ENCODE measurements at regions of chr5 and their contacts with region 1.

Region 1: GRCh38 chr5:54905943-54906537 is 79.4 kb downstream of the ESM1 start:
- DNase-seq: peak; percentile 42 to 80 (median 70)
- ATAC-seq: peak; percentile 36
- H3K4me3 ChIP-seq: no peak overlapping the region
- H3K4me3 Mint-ChIP-seq: no peak overlapping the region
- H3K27ac ChIP-seq: no peak overlapping the region
- H3K27ac Mint-ChIP-seq: no peak overlapping the region
- H3K4me1 ChIP-seq: no peaks in the 10 kb centered on the region
- H3K4me1 Mint-ChIP-seq: peaks cover 10% of the 10 kb centered on the region
- H3K27me3 ChIP-seq: no peaks in the 10 kb centered on the region
- H3K27me3 Mint-ChIP-seq: peaks cover 6% of the 10 kb centered on the region
- CTCF ChIP-seq: peak; percentile 77

Region 2: DNA sequence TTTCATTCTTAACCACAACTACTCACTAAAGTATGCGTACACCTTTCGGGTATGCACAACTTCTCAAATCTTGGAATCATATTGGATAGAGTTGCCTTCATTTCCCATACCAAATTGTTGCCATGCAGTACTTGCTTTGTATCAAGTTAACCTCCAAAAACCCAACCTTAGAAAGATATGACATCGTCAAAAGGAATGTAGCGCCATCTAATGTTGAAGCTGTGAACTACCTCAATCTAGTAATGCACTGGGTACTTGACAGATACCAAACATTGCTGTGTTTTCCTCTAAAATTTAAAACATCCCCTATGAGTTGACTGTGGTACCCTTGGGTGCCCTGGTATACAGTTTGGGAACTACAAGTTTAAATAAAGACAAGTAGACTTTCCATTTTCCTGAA is 914.1 kb before region 1 on chr5:
- CTCF ChIA-PET with region 1: no interaction called
- POLR2A ChIA-PET with region 1: no interaction called
- intact Hi-C with region 1: no loop called
- DNase-seq: no peak
- ATAC-seq: no peak
- H3K4me3 ChIP-seq: no peak overlapping the region
- H3K4me3 Mint-ChIP-seq: no peak overlapping the region
- H3K27ac ChIP-seq: no peak overlapping the region
- H3K27ac Mint-ChIP-seq: no peak overlapping the region
- H3K4me1 ChIP-seq: no peaks in the 10 kb centered on the region
- H3K4me1 Mint-ChIP-seq: no peaks in the 10 kb centered on the region
- H3K27me3 ChIP-seq: no peaks in the 10 kb centered on the region
- H3K27me3 Mint-ChIP-seq: no peaks in the 10 kb centered on the region
- CTCF ChIP-seq: no peak

Region 3: GRCh38 chr5:54895816-54896341 is 10.2 kb before region 1 on chr5:
- CTCF ChIA-PET with region 1: interaction called, 11 read pairs
- POLR2A ChIA-PET with region 1: no interaction called
- intact Hi-C with region 1: no loop called
- DNase-seq: peak in 2 of 9 experiments; percentile 26 to 46
- ATAC-seq: no peak
- H3K4me3 ChIP-seq: no peak overlapping the region
- H3K4me3 Mint-ChIP-seq: peak overlapping the region; percentile 60
- H3K27ac ChIP-seq: no peak overlapping the region
- H3K27ac Mint-ChIP-seq: peak overlapping the region; percentile 32
- H3K4me1 ChIP-seq: no peaks in the 10 kb centered on the region
- H3K4me1 Mint-ChIP-seq: peaks cover 5% of the 10 kb centered on the region
- H3K27me3 ChIP-seq: no peaks in the 10 kb centered on the region
- H3K27me3 Mint-ChIP-seq: peaks cover 26% of the 10 kb centered on the region
- CTCF ChIP-seq: no peak

Region 4: DNA sequence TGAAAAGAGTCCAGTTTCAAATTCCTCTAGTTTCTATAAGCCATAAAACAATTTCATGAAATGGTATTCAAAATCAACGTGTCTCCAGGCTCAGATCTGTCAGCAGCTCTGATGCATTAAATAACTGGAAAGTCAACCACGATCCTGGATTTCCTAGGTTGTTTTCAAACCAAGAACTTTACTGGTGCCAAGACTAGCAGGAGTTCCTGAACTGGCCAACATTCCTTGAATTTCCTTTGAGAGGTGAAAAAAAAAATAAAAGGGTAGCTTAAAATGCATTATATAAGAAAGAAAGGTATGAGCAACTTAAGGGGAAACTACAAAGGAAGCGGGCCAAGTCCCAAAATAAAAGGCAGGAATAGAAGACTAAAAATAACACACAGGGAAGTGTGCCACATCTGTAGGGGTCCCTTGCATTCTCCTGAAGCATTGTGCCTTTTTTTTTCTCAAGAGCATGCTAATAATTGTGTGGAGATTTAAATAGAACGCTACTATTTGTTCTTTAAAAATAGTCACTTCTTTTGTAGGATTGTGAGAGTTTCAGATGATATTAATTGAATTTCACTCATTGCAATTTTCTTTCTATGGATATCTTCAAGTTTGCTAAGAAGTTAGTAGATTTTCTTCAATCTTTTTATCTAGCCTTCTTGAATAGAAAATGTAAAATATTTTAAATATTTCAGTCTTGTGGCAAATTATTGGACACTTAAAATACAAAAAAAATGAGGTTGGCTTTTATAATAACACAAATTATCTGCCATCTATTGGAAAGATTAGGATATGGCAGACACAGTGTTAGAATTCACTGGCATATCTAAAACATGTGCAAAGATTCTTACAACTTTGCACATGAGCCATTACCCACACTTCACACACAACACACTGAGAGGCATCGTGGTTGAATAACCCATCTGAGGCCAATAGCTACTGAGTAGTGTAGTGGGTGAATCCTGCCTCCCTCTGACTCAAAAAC is 64.1 kb after region 1 on chr5:
- CTCF ChIA-PET with region 1: interaction called, 12 read pairs
- POLR2A ChIA-PET with region 1: no interaction called
- intact Hi-C with region 1: no loop called
- DNase-seq: no peak
- ATAC-seq: no peak
- H3K4me3 ChIP-seq: no peak overlapping the region
- H3K4me3 Mint-ChIP-seq: no peak overlapping the region
- H3K27ac ChIP-seq: no peak overlapping the region
- H3K27ac Mint-ChIP-seq: no peak overlapping the region
- H3K4me1 ChIP-seq: no peaks in the 10 kb centered on the region
- H3K4me1 Mint-ChIP-seq: no peaks in the 10 kb centered on the region
- H3K27me3 ChIP-seq: no peaks in the 10 kb centered on the region
- H3K27me3 Mint-ChIP-seq: no peaks in the 10 kb centered on the region
- CTCF ChIP-seq: no peak

Region 5: DNA sequence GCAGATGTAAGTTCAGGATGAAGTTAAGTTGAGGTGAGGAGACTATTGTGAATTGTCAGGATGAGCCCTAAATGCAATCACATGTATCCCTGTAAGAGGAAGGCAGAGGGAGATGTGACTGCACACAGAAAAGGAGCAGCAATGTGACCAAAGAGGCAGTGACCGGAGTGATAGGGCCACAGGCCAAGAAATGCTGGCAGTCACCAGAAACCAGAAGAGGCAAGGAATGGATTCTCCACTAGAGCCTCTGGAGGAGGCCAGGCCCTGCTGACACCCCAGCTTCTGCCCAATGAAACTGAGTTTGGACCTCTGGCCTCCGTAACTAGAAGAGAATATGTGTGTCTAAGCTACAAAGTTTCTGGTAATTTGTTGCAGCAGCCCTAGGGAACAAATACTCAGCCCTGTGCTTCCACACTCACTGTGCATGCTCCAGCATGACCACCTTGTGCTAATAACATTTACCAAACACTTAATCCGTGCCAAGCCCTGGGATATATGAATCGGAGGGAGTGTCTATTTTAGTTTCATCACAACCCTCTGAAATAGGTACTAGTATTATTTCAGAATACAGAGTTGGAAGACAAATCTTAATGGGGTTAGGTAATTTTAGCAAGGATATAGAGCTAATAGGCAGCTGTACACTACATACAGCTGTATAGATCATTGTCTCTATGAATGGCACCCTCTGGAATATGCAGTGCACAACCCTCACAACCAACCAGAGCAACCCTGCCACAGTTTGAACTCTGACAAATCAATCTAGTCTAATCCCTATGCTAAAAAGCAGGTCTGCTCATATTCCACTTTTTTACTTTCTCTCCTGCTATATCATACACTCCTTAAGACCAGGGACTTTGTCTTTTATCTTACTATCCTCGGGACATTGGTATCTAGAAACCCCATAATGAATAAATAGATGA is 246.1 kb after region 1 on chr5:
- CTCF ChIA-PET with region 1: interaction called, 179 read pairs
- POLR2A ChIA-PET with region 1: no interaction called
- intact Hi-C with region 1: no loop called
- DNase-seq: no peak
- ATAC-seq: no peak
- H3K4me3 ChIP-seq: no peak overlapping the region
- H3K4me3 Mint-ChIP-seq: no peak overlapping the region
- H3K27ac ChIP-seq: no peak overlapping the region
- H3K27ac Mint-ChIP-seq: no peak overlapping the region
- H3K4me1 ChIP-seq: no peaks in the 10 kb centered on the region
- H3K4me1 Mint-ChIP-seq: no peaks in the 10 kb centered on the region
- H3K27me3 ChIP-seq: no peaks in the 10 kb centered on the region
- H3K27me3 Mint-ChIP-seq: peaks cover 5% of the 10 kb centered on the region
- CTCF ChIP-seq: no peak

Region 6: DNA sequence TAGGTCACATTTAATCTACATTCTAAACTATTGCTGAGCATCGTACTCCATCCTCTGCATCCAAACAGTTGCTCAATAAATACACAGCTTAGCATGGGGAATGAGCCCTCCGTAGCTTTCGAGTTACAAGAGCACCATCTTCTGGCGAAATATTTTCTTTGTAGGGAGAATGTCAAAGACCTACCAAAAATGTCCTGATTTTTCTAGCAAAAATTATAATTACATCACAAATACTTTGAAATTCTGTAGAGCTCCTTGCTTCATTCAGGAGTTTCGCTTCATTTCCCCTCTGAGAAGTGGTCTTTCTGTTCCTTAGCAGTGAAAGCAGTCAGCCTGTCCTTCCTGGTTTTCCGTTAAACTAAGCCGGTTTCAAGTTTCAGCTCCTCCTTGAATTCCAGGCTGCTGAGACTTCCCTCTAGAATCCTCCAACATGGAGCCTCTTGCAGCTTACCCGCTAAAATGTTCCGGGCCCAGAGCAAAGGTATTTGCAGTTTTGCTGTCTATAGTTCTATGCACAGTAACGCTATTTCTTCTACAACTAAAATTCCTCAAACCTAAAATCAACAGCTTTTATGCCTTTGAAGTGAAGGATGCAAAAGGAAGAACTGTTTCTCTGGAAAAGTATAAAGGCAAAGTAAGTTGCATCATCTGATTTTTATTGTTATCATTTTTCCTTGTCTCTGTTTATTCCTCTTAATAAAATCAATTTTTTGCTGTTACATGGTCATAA is 253.9 kb after region 1 on chr5 and contains the start of gene GPX8:
- CTCF ChIA-PET with region 1: interaction called, 179 read pairs
- POLR2A ChIA-PET with region 1: interaction called, 5 read pairs
- intact Hi-C with region 1: loop called (anchors 1 kb)
- DNase-seq: peak in 3 of 9 experiments; percentile 32 to 73 (median 64)
- ATAC-seq: peak; percentile 79
- H3K4me3 ChIP-seq: no peak within 1 kb of the TSS
- H3K4me3 Mint-ChIP-seq: no peak within 1 kb of the TSS
- H3K27ac ChIP-seq: no peak within 1 kb of the TSS
- H3K27ac Mint-ChIP-seq: no peak within 1 kb of the TSS
- H3K4me1 ChIP-seq: no peaks in the 10 kb centered on the region
- H3K4me1 Mint-ChIP-seq: no peaks in the 10 kb centered on the region
- H3K27me3 ChIP-seq: no peaks in the 10 kb centered on the region
- H3K27me3 Mint-ChIP-seq: peaks cover 19% of the 10 kb centered on the region
- CTCF ChIP-seq: peak; percentile 73
- total RNA-seq, gene GPX8: not detected

Region 7: GRCh38 chr5:55254802-55255201 is 348.8 kb after region 1 on chr5:
- CTCF ChIA-PET with region 1: no interaction called
- POLR2A ChIA-PET with region 1: no interaction called
- intact Hi-C with region 1: loop called in 1 of 2 experiments (anchors 10 kb)
- DNase-seq: no peak
- ATAC-seq: no peak
- H3K4me3 ChIP-seq: no peak overlapping the region
- H3K4me3 Mint-ChIP-seq: no peak overlapping the region
- H3K27ac ChIP-seq: no peak overlapping the region
- H3K27ac Mint-ChIP-seq: no peak overlapping the region
- H3K4me1 ChIP-seq: no peaks in the 10 kb centered on the region
- H3K4me1 Mint-ChIP-seq: no peaks in the 10 kb centered on the region
- H3K27me3 ChIP-seq: no peaks in the 10 kb centered on the region
- H3K27me3 Mint-ChIP-seq: no peaks in the 10 kb centered on the region
- CTCF ChIP-seq: no peak